Panc1 (cell line): ENCODE measurements at regions of chr9 and their contacts with region 1.

Region 1: DNA sequence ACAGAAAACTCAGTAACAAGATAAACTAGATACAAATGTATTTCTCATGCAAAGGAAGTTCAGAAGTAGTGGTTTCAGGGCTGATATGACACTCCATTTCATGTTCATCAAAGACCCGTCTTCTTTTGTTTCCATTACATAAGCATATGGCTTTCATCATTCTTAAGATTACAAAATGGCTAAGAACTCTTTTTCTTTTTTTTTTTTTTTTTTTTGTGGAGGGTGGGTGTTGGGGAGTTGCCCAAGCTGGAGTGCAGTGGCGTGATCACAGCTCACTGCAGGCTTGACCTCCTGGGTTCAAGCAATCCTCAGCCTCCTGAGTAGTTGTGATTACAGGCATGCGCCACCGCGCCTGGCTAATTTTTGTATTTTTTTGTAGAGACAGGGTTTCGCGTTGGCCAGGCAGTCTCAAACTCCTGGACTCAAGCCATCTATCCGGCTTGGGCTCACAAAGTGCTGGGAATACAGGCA is 22.0 kb upstream of the PTBP3 start:
- DNase-seq: no peak
- ATAC-seq: no peak
- H3K4me3 ChIP-seq: no peak overlapping the region
- H3K27ac ChIP-seq: no peak overlapping the region
- H3K4me1 ChIP-seq: no peaks in the 10 kb centered on the region
- H3K27me3 ChIP-seq: no peaks in the 10 kb centered on the region
- CTCF ChIP-seq: no peak

Region 2: DNA sequence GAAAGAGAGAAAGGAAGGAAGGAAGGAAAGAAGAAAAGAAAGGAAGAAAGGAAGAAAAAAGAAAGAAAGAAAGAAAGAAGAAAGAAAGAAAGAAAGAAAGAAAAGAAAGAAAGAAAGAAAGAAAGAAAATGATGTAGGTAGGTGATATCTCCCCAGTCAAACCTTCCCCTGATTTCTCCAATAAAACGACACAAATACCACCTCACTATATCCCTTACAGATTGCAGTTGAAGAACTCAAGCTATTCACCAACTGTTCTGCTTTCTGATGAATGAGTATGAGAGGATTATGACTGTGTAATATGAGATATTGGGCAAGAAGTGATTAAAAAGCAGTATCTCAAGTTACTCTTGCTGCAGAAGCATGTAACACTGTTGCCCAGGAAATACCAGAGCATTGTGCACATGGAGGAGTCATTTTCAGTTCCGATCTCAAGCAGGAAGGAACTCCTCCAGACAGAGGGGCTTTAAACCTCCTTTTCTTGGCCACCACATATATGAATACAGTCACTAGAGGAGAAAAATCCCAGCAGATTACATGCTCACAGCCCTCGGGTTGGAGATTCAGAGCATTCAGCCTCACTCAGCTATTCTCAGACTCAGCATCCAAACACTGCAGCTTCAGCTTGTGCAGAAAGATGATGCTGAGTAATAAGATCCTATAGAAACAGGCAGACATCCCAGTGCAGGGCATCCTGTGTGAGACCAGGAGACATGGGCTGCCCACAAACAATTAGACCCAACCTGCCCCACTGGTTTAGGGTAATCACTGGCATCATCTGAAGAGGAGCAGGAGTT is 397.4 kb before region 1 on chr9:
- CTCF ChIA-PET with region 1: no interaction called
- POLR2A ChIA-PET with region 1: no interaction called
- in situ Hi-C with region 1: no loop called
- intact Hi-C with region 1: no loop called
- DNase-seq: peak; percentile 77
- ATAC-seq: peak; percentile 50
- H3K4me3 ChIP-seq: peak overlapping the region; percentile 6 to 37; a peak in 3 of 4 replicates
- H3K27ac ChIP-seq: peak overlapping the region; percentile 68; the same call in 1 of the 2 replicates
- H3K4me1 ChIP-seq: peaks cover 30% of the 10 kb centered on the region
- H3K27me3 ChIP-seq: no peaks in the 10 kb centered on the region
- CTCF ChIP-seq: no peak

Region 3: DNA sequence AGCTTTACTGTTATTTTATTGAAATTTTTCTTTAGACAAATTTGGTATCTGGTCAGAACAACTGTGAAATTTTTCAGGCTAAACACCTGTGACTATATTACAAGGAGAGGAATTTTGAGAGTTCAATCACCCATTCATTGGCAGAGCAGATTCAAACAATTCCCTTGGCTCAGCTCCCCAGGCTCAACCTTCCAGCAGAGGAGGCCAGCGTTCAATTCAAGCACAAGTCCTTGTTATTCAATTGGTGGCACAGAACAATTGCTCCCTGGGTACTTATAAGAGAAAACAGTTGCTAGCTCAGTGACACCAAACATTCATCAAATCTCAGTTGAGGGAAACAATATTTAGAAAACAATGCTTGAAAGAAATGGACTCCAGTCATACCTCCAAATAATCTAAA is 263.7 kb before region 1 on chr9:
- CTCF ChIA-PET with region 1: interaction called, 6 read pairs
- POLR2A ChIA-PET with region 1: no interaction called
- in situ Hi-C with region 1: no loop called
- intact Hi-C with region 1: loop called (anchors 2 kb)
- DNase-seq: peak; percentile 5
- ATAC-seq: 0 out of 2 replicates have a peak, but pooled peaks have one; percentile 56
- H3K4me3 ChIP-seq: no peak overlapping the region
- H3K27ac ChIP-seq: no peak overlapping the region
- H3K4me1 ChIP-seq: no peaks in the 10 kb centered on the region; the same call in 1 of the 2 replicates
- H3K27me3 ChIP-seq: no peaks in the 10 kb centered on the region
- CTCF ChIP-seq: peak; percentile 76

Region 4: GRCh38 chr9:112333639-112334431 is 21.6 kb before region 1 on chr9:
- CTCF ChIA-PET with region 1: no interaction called
- POLR2A ChIA-PET with region 1: no interaction called
- in situ Hi-C with region 1: no loop called
- intact Hi-C with region 1: no loop called
- DNase-seq: no peak
- ATAC-seq: peak; percentile 89
- H3K4me3 ChIP-seq: peak overlapping the region; percentile 65 to 83
- H3K27ac ChIP-seq: peak overlapping the region; percentile 87
- H3K4me1 ChIP-seq: peaks cover under 1% of the 10 kb centered on the region; the same call in 1 of the 2 replicates
- H3K27me3 ChIP-seq: no peaks in the 10 kb centered on the region
- CTCF ChIP-seq: peak; percentile 83

Region 5: DNA sequence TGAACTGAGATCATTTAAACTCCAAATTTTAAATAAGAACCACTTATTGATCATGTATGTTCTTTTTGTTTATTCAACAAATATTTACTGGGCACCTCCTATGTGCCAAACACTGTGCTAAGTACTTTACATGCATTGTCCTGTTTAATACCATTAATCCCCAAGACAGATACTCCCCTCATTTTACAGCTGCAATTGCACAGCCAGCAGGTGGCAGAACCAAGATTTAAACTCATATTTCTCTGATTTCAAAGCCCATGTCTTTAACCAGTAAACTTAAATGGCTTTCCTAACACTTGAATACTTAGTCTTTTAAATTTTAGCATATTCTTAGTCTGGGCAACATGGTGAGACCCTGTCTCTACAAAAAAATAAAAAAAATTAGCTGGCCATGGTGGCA is 87.7 kb after region 1 on chr9:
- CTCF ChIA-PET with region 1: no interaction called
- POLR2A ChIA-PET with region 1: no interaction called
- in situ Hi-C with region 1: no loop called
- intact Hi-C with region 1: no loop called
- DNase-seq: no peak
- ATAC-seq: no peak
- H3K4me3 ChIP-seq: no peak overlapping the region
- H3K27ac ChIP-seq: no peak overlapping the region
- H3K4me1 ChIP-seq: no peaks in the 10 kb centered on the region
- H3K27me3 ChIP-seq: no peaks in the 10 kb centered on the region
- CTCF ChIP-seq: peak; percentile 43; the same call in 1 of the 2 replicates